GM12878 (cell line): ENCODE measurements at regions of chr14 and their contacts with region 1.

Region 1: DNA sequence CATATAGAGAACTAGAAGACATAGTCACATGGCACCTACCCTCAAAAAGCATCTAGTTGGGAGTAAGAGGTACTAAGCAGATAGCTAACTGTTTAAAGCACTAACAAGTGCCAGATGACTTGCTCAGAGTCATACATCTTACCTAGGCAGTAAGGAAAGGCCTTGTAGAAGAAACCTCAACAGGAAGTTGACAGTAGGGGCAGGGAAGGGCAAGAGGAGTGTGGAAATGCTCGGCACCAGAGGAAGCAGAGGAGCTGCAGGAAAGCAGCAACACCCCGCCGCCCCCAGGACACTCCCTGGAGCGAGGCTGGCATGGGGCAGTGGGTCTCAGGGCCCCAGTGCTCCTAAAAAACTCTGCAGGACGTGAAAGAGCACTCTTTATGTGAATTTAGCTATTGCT is 92.9 kb downstream of the PPP2R5C start:
- DNase-seq: no peak
- ATAC-seq: no peak
- H3K4me3 ChIP-seq: no peak overlapping the region
- H3K27ac ChIP-seq: 0 out of 2 replicates have a peak overlapping the region, but pooled peaks have one; percentile 3
- H3K4me1 ChIP-seq: peaks cover 29% of the 10 kb centered on the region
- H3K27me3 ChIP-seq: no peaks in the 10 kb centered on the region
- CTCF ChIP-seq: no peak
- EP300 ChIP-seq: no peak
- POLR2A ChIP-seq: no peak
- RAD21 ChIP-seq: no peak

Region 2: GRCh38 chr14:101761032-101761880 is 93.1 kb before region 1 on chr14 and contains the start of gene PPP2R5C:
- CTCF ChIA-PET with region 1: no interaction called
- POLR2A ChIA-PET with region 1: no interaction called
- RAD21 ChIA-PET with region 1: no interaction called
- SMC1A ChIA-PET with region 1: no interaction called
- in situ Hi-C with region 1: no loop called
- intact Hi-C with region 1: no loop called
- DNase-seq: no peak
- ATAC-seq: peak; percentile 93
- H3K4me3 ChIP-seq: peak within 1 kb of the TSS; percentile 84
- H3K27ac ChIP-seq: 0 out of 2 replicates have a peak within 1 kb of the TSS, but pooled peaks have one; percentile 37
- H3K4me1 ChIP-seq: no peaks in the 10 kb centered on the region
- H3K27me3 ChIP-seq: no peaks in the 10 kb centered on the region; a peak in 2 of 4 replicates
- CTCF ChIP-seq: no peak
- EP300 ChIP-seq: no peak
- POLR2A ChIP-seq: peak; percentile 67; the same call in 1 of the 2 replicates
- RAD21 ChIP-seq: no peak
- polyA plus RNA-seq, gene PPP2R5C: 190 to 199 TPM

Region 3: GRCh38 chr14:101876555-101876938 is 22.2 kb after region 1 on chr14:
- CTCF ChIA-PET with region 1: interaction called, 3 read pairs
- POLR2A ChIA-PET with region 1: no interaction called
- RAD21 ChIA-PET with region 1: interaction called, 3 read pairs
- SMC1A ChIA-PET with region 1: interaction called, 11 read pairs
- in situ Hi-C with region 1: no loop called
- intact Hi-C with region 1: no loop called
- DNase-seq: peak; percentile 75
- ATAC-seq: peak; percentile 93
- H3K4me3 ChIP-seq: peak overlapping the region; percentile 33
- H3K27ac ChIP-seq: peak overlapping the region; percentile 92
- H3K4me1 ChIP-seq: peaks cover 49% of the 10 kb centered on the region
- H3K27me3 ChIP-seq: no peaks in the 10 kb centered on the region
- CTCF ChIP-seq: no peak
- EP300 ChIP-seq: peak; percentile 92 to 99
- POLR2A ChIP-seq: no peak
- RAD21 ChIP-seq: no peak